Activated CD4-positive, alpha-beta T cell treated with anti-CD3 and anti-CD28 coated beads for 36 hours (primary cell): ENCODE measurements at regions of chr1 and their contacts with region 1.

Region 1: GRCh38 chr1:52552505-52553361 is at the start of gene TUT4:
- DNase-seq: peak; percentile 90
- ATAC-seq: peak; percentile 57
- H3K4me3 Mint-ChIP-seq: no peak within 1 kb of the TSS
- H3K27ac Mint-ChIP-seq: peak within 1 kb of the TSS; percentile 84
- H3K4me1 Mint-ChIP-seq: peaks cover 34% of the 10 kb centered on the region
- H3K27me3 Mint-ChIP-seq: no peaks in the 10 kb centered on the region
- total RNA-seq, gene TUT4: 61.6 to 71.7 TPM

Region 2: DNA sequence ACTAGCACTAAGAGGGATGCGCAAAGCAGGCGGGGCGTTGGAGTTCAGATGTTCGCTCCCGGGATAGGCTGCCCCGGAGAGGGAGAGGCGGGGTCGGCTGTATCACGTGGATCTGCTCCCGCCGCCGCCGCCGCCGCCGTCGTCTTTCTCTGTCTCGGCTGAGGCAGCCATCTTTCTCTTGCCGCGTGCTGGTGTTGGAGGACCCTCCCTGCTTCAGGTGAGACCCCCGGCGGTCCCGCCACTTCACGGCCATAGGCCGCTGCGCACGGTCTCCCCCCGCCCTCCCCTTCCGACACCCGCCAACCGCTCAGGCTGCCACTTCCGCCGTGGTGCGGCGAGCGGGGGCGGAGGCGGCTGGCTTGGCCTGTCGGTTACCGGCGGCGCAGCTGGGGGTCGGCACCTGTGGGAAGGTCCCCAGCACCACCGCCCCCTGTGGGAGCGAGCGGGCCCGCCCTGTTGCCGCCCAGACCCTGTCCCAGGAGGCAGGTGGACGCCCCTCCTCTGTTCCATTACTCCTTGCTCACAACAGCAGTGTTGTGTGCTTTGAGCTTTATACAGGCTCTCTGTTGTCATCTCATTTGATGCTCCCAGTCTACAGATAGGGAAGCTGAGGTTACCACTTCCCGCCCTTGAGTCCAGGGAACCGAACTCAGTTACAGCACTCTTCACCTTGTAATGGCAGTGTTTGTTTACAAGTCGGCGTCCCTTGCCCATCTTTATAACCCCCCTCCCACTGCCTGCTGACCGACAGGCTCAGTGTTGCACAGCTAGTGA is 496.4 kb before region 1 on chr1 and contains the start of gene BTF3L4:
- CTCF ChIA-PET with region 1: no interaction called
- POLR2A ChIA-PET with region 1: no interaction called
- intact Hi-C with region 1: loop called in 1 of 2 experiments (anchors 1 kb)
- DNase-seq: peak; percentile 98
- ATAC-seq: peak; percentile 96
- H3K4me3 Mint-ChIP-seq: peak within 1 kb of the TSS; percentile 91
- H3K27ac Mint-ChIP-seq: peak within 1 kb of the TSS; percentile 99
- H3K4me1 Mint-ChIP-seq: peaks cover 40% of the 10 kb centered on the region
- H3K27me3 Mint-ChIP-seq: no peaks in the 10 kb centered on the region
- total RNA-seq, gene BTF3L4: 33.8 to 37.8 TPM

Region 3: DNA sequence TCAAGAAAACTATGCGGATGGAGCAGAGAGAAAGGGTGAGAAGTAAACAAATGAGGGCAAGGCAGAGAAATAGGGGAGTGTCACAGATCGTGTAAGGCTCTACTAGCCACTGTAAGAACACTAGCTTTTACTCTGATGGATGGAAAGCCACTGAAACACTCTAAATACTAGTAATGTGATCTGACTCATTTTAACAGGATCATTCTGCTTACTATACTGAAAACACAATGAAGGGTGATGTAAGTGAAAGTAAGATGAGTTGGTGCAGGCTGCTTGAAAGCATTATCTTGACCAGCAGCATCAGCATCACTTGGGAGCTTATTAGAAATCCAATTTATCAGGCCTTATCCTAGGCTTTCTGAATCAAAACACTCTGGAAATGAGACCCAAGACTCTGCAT is 32.6 kb before region 1 on chr1:
- CTCF ChIA-PET with region 1: interaction called, 5 read pairs
- POLR2A ChIA-PET with region 1: interaction called, 5 read pairs
- intact Hi-C with region 1: loop called (anchors 1 to 5 kb)
- DNase-seq: no peak
- ATAC-seq: peak; percentile 99
- H3K4me3 Mint-ChIP-seq: no peak overlapping the region
- H3K27ac Mint-ChIP-seq: peak overlapping the region; percentile 91
- H3K4me1 Mint-ChIP-seq: peaks cover 36% of the 10 kb centered on the region
- H3K27me3 Mint-ChIP-seq: no peaks in the 10 kb centered on the region

Region 4: GRCh38 chr1:52662645-52663313 is 110.0 kb after region 1 on chr1:
- CTCF ChIA-PET with region 1: no interaction called
- POLR2A ChIA-PET with region 1: no interaction called
- intact Hi-C with region 1: loop called in 1 of 2 experiments (anchors 2 kb)
- DNase-seq: no peak
- ATAC-seq: no peak
- H3K4me3 Mint-ChIP-seq: no peak overlapping the region
- H3K27ac Mint-ChIP-seq: no peak overlapping the region
- H3K4me1 Mint-ChIP-seq: peaks cover 16% of the 10 kb centered on the region
- H3K27me3 Mint-ChIP-seq: no peaks in the 10 kb centered on the region

Region 5: GRCh38 chr1:52726265-52727113 is 173.8 kb after region 1 on chr1 and contains the start of gene ZYG11B:
- CTCF ChIA-PET with region 1: no interaction called
- POLR2A ChIA-PET with region 1: no interaction called
- intact Hi-C with region 1: loop called in 1 of 2 experiments (anchors 1 kb)
- DNase-seq: peak; percentile 96
- ATAC-seq: peak; percentile 91
- H3K4me3 Mint-ChIP-seq: peak within 1 kb of the TSS; percentile 93
- H3K27ac Mint-ChIP-seq: peak within 1 kb of the TSS; percentile 85
- H3K4me1 Mint-ChIP-seq: peaks cover 32% of the 10 kb centered on the region
- H3K27me3 Mint-ChIP-seq: no peaks in the 10 kb centered on the region
- total RNA-seq, gene ZYG11B: 12.9 to 14.3 TPM

Region 6: DNA sequence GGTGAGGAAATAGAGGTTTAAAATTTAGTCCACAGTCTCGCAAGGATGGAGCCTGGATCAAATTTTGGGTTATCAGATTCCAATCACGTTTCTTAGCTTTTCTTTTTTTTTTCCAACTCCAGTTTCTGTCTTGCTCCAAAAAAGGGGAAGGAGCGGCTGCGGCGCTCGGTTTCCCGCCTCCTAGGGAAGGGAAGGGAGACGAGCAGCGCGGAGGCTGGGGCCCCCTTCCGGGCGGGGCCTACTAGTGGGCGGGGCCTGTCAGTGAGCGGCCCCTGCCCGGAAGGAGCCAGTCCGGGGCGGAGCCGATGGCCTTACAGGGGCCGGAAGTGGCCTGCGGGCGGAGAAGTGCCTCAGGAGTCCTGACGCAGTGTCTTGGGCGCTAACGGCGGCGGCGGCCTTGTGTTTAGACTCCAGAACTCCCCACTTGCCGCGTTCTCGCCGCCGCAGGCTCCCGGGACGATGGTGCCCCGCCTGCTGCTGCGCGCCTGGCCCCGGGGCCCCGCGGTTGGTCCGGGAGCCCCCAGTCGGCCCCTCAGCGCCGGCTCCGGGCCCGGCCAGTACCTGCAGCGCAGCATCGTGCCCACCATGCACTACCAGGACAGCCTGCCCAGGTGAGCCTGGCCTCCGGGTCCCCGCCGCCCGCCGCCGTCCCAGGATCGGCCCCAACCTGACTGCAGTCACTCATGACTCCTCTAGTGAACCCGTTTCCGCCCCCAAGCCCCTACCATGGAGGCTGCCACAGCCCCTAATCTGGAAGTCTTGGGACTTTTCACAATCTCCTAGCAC is 643.9 kb after region 1 on chr1 and contains the start of gene CPT2:
- CTCF ChIA-PET with region 1: no interaction called
- POLR2A ChIA-PET with region 1: no interaction called
- intact Hi-C with region 1: loop called in 1 of 2 experiments (anchors 5 kb)
- DNase-seq: peak; percentile 96
- ATAC-seq: peak; percentile 98
- H3K4me3 Mint-ChIP-seq: peak within 1 kb of the TSS; percentile 98
- H3K27ac Mint-ChIP-seq: peak within 1 kb of the TSS; percentile 99
- H3K4me1 Mint-ChIP-seq: peaks cover 25% of the 10 kb centered on the region
- H3K27me3 Mint-ChIP-seq: no peaks in the 10 kb centered on the region
- total RNA-seq, gene CPT2: 20.7 to 23.7 TPM